Activated CD8-positive, alpha-beta T cell treated with anti-CD3 and anti-CD28 coated beads for 36 hours (primary cell): ENCODE measurements at regions of chr6 and their contacts with region 1.

Region 1: GRCh38 chr6:38997128-38997761 is 51.3 kb upstream of the GLP1R start:
- DNase-seq: peak; percentile 74
- ATAC-seq: peak; percentile 66
- H3K4me3 Mint-ChIP-seq: no peak overlapping the region
- H3K27ac Mint-ChIP-seq: no peak overlapping the region
- H3K4me1 Mint-ChIP-seq: no peaks in the 10 kb centered on the region
- H3K27me3 Mint-ChIP-seq: peaks cover 32% of the 10 kb centered on the region
- CTCF ChIP-seq: peak; percentile 72

Region 2: DNA sequence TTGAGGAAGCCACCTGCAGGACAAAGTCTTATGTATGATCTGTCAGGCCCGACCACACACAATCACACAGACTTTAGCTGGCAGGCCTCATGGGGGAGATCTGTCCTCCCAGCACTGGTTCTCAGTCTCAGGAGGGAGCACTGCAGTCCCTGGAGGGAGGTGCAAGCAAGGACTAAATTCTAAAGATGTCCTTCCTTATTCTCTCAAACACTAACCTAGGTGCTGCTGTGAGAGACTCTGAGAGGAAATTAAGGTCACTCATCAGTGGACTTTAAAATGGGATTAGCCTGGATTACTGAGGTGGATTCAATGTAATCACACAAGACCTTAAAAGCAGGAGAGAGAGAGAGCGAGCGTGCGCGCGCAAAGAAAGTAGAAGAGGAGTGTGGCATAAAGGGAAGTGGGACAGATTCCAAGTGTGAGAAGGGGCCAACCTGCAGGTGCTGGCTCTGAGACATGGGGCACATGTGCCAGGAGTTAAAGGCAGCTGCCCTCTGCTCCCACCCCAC is 308.6 kb before region 1 on chr6:
- CTCF ChIA-PET with region 1: no interaction called
- POLR2A ChIA-PET with region 1: no interaction called
- intact Hi-C with region 1: no loop called
- DNase-seq: no peak
- ATAC-seq: no peak
- H3K4me3 Mint-ChIP-seq: no peak overlapping the region
- H3K27ac Mint-ChIP-seq: no peak overlapping the region
- H3K4me1 Mint-ChIP-seq: peaks cover 20% of the 10 kb centered on the region
- H3K27me3 Mint-ChIP-seq: no peaks in the 10 kb centered on the region
- CTCF ChIP-seq: no peak

Region 3: GRCh38 chr6:39029156-39030011 is 32.1 kb after region 1 on chr6:
- CTCF ChIA-PET with region 1: interaction called, 22 read pairs
- POLR2A ChIA-PET with region 1: no interaction called
- intact Hi-C with region 1: no loop called
- DNase-seq: peak; percentile 75
- ATAC-seq: peak; percentile 99
- H3K4me3 Mint-ChIP-seq: no peak overlapping the region
- H3K27ac Mint-ChIP-seq: no peak overlapping the region
- H3K4me1 Mint-ChIP-seq: no peaks in the 10 kb centered on the region
- H3K27me3 Mint-ChIP-seq: peaks cover 42% of the 10 kb centered on the region
- CTCF ChIP-seq: peak; percentile 84

Region 4: GRCh38 chr6:39153766-39154397 is 156.6 kb after region 1 on chr6:
- CTCF ChIA-PET with region 1: interaction called, 11 read pairs
- POLR2A ChIA-PET with region 1: no interaction called
- intact Hi-C with region 1: no loop called
- DNase-seq: peak; percentile 75
- ATAC-seq: peak; percentile 92
- H3K4me3 Mint-ChIP-seq: no peak overlapping the region
- H3K27ac Mint-ChIP-seq: peak overlapping the region; percentile 86
- H3K4me1 Mint-ChIP-seq: peaks cover 58% of the 10 kb centered on the region
- H3K27me3 Mint-ChIP-seq: peaks cover 8% of the 10 kb centered on the region
- CTCF ChIP-seq: no peak

Region 5: DNA sequence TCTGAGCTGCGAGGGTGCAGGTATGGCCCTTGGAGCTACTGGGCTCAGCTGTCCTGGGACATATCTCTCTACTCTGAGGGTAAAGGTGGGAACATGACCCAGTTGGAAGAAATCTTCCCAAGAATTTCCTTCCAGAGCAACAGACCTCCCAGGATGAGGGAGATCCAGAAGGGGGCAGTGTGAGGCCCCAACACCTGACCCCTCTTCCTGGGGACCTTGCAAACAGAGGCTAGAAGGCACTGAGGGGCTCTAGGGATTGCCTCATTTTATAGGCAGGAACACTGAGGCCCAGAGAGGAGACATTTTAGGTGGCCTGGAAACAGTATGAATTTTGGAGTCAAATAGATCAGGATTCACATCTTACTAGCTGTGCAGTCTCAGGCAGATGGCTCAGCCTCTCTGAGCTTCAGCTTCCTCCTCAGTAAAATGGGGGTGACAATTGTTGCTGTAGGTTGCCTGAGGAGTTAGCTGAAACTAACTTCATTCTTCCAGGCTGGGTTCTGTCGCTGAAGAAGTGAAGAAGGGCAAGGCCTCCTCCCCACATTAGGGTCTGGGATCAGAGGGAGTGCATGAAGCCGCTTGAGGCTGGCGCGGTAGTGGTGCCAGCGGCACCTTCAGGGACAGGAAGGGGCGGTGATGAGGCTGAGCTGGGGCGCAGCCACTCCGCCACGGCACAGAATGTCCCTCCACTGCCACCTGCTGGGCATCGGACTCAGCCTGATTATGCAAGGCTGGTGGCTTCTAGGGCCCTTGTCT is 305.6 kb after region 1 on chr6:
- CTCF ChIA-PET with region 1: interaction called, 64 read pairs
- POLR2A ChIA-PET with region 1: no interaction called
- intact Hi-C with region 1: no loop called
- DNase-seq: peak; percentile 96
- ATAC-seq: peak; percentile 99
- H3K4me3 Mint-ChIP-seq: peak overlapping the region; percentile 44
- H3K27ac Mint-ChIP-seq: peak overlapping the region; percentile 60
- H3K4me1 Mint-ChIP-seq: peaks cover 4% of the 10 kb centered on the region
- H3K27me3 Mint-ChIP-seq: no peaks in the 10 kb centered on the region
- CTCF ChIP-seq: peak; percentile 90